ENCODE measurements at regions of chr11 and their contacts with region 1.

Region 1: GRCh38 chr11:18713646-18714442 is 12.1 kb downstream of the IGSF22 start:
- DNase-seq: no peak
- H3K4me3 ChIP-seq: no peak overlapping the region
- H3K27ac ChIP-seq: no peak overlapping the region
- H3K4me1 ChIP-seq: no peaks in the 10 kb centered on the region
- H3K27me3 ChIP-seq: peaks cover 95% of the 10 kb centered on the region
- CTCF ChIP-seq: no peak

Region 2: GRCh38 chr11:18657673-18658072 is 56.2 kb before region 1 on chr11:
- CTCF ChIA-PET with region 1: interaction called, 11 read pairs
- POLR2A ChIA-PET with region 1: no interaction called
- intact Hi-C with region 1: no loop called
- DNase-seq: no peak
- H3K4me3 ChIP-seq: no peak overlapping the region
- H3K27ac ChIP-seq: no peak overlapping the region
- H3K4me1 ChIP-seq: no peaks in the 10 kb centered on the region
- H3K27me3 ChIP-seq: peaks cover 10% of the 10 kb centered on the region; the same call in 1 of the 2 replicates
- CTCF ChIP-seq: no peak

Region 3: DNA sequence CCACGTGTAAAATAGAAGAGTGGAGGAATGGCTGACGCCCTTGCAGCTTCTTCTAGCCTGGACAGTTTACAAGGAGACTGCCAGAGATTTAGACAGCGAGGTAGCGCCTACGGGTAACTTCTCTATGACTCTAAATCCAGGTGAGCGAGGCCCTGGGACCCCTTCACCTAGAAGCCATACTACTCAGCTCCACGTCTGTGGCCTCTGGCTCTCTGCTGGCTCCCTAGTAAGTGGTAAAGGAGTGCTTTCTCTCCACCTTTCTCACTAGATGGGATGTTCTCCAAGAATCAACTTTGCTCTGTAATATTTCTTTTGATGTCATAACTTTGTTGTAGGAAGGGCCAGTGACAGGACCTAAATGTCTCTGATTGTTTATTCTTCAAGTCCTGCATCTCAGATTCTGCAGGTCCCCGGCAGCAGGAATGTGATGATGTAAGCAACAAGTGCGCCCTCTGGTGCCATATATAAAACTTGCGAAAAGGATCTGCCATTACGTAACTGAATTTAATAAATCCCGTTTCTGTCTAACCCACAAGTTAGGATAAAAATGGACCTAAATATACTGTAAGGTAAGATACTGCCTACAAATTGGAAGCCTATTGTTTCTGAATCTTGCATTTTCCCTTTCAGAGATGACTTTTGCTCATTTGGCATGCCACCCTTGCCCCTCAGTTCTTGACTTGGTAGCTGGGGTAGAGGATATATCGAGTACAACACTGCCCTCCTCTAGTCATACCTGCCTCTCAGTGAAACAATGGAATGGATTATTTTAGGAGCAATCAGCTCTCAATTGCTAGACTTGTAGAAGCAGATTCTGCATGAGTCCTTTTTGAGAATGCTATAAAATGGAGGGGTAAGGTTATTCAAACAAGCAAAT is 88.8 kb after region 1 on chr11:
- CTCF ChIA-PET with region 1: no interaction called
- POLR2A ChIA-PET with region 1: no interaction called
- intact Hi-C with region 1: no loop called
- DNase-seq: peak; percentile 51 to 67
- H3K4me3 ChIP-seq: no peak overlapping the region
- H3K27ac ChIP-seq: no peak overlapping the region
- H3K4me1 ChIP-seq: no peaks in the 10 kb centered on the region
- H3K27me3 ChIP-seq: peaks cover 21% of the 10 kb centered on the region; the same call in 1 of the 2 replicates
- CTCF ChIP-seq: peak; percentile 86